AG04450 (cell line): ENCODE measurements at regions of chr2 and their contacts with region 1.

Region 1: DNA sequence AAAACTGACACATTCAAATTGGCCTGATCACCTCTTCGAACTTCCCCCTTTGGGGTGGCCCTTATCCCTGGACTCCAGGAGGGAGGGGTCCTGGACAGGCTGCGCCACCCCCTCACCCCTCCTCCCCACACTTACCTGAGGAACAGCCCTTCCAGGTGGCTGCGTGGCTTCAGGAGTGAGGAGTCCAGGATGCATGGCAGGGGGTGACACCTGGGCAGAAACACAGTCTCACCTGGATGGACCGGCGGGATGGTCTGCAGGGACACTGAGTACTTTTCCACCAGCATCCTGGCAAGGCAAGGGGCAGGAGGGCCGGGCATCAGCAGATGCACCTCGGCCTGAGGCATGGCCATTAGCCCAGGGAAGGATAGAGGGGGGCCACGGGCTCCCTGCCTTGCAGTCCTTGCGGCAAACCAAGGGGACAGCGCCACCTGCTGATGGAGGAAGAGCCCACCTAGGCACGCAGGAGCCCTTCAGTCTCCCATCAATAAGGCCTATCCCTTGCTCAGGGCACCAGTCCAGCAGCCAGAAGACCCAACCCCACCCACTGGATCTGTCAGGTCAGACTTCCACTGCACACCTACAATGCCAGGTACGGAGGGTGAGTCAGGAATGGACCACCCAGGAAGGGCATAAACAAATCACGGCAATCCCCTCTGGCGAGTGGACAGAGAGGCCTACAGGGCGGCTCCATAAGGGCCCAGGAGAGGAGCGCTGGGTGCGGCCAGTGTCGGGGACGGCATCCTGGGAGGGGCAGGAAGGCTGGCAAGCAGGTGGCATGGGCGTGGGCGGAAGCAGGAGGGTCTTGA is 26.0 kb downstream of the FAM178B start:
- DNase-seq: peak; percentile 61
- H3K4me3 ChIP-seq: no peak overlapping the region
- H3K27ac ChIP-seq: no peak overlapping the region
- H3K27me3 ChIP-seq: peaks cover 2% of the 10 kb centered on the region
- CTCF ChIP-seq: peak; percentile 94

Region 2: GRCh38 chr2:96208143-96209010 is 752.0 kb before region 1 on chr2 and contains the start of gene STARD7:
- CTCF ChIA-PET with region 1: no interaction called
- POLR2A ChIA-PET with region 1: no interaction called
- DNase-seq: peak; percentile 94
- H3K4me3 ChIP-seq: peak within 1 kb of the TSS; percentile 88
- H3K27ac ChIP-seq: peak within 1 kb of the TSS; percentile 87
- H3K27me3 ChIP-seq: no peaks in the 10 kb centered on the region
- CTCF ChIP-seq: no peak
- polyA plus RNA-seq, gene STARD7: 84.2 and 106 TPM in 2 replicates

Region 3: GRCh38 chr2:96844405-96844808 is 116.0 kb before region 1 on chr2:
- CTCF ChIA-PET with region 1: interaction called, 10 read pairs
- POLR2A ChIA-PET with region 1: no interaction called
- DNase-seq: no peak
- H3K4me3 ChIP-seq: no peak overlapping the region
- H3K27ac ChIP-seq: no peak overlapping the region
- H3K27me3 ChIP-seq: no peaks in the 10 kb centered on the region
- CTCF ChIP-seq: no peak

Region 4: DNA sequence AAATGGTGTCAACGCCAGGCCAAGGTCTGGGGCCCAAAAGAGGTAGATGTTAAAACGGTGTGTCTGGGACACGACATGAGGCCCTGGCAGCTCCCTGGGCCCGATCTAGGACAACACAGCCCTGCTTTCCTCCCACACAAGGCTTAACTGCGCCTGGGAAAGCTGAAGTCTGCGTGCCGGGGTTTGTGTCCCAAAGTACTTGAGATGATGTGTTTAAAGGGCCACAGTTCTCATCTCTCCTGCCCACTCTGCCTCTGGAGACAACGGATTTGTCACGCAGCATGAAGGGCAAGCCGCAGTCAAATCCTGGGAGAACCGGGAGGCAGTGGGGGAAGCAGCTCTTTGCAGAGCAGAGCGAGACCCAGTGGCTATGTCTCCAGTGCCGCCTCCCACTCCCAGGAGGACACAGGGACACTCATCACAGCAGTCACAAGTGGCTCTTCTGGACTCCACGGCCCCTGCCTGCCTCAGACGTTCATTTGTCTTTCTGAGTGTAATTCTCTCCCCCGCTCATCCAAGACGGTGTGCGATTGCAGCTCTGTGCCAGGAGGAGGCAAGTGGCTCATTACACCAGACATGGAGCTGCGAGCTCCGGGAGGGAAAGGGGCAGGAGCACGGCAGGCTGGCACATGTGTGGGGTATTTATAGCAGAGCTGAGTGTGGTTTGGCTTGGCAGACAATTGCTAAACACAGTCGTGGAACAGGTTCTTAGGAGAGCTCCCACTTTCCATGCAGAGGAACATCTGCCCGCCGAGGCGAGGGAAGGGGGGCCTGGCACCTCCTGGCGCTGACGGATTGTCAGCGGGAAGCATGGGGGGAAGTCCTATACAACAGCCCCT is 32.7 kb before region 1 on chr2:
- CTCF ChIA-PET with region 1: no interaction called
- POLR2A ChIA-PET with region 1: no interaction called
- DNase-seq: no peak
- H3K4me3 ChIP-seq: peak overlapping the region; percentile 10
- H3K27ac ChIP-seq: no peak overlapping the region
- H3K27me3 ChIP-seq: peaks cover 60% of the 10 kb centered on the region
- CTCF ChIP-seq: peak; percentile 30